ENCODE measurements at regions of chr1 and their contacts with region 1.

Region 1: DNA sequence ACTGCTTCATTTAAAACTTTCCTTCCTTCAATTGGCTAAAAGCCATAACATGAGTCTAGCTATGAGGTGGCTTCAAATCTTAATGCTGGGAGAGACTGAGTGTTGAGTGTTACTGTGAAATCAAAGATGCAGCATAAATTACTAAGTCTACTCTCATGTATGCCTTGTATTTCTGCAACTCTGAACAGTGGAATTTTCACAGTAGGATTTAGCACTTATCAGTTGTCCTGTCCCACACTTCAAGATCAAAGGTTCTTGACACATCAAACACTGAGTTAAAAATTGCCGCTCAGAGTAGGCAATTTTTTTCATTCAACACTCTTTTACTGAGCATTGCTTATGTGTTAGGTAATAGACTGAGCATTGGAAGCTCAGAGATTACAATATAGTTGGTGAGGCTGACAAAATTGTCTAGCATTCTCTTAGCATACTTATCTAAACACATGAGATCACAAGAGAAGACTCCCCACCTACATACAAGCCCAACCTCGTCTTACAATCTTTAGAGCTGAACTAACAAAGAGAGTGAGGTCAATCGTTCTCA is 56.4 kb upstream of the ADORA3 start:
- DNase-seq: no peak
- ATAC-seq: no peak
- H3K4me3 ChIP-seq: no peak overlapping the region
- H3K4me3 Mint-ChIP-seq: no peak overlapping the region
- H3K27ac ChIP-seq: no peak overlapping the region
- H3K27ac Mint-ChIP-seq: no peak overlapping the region
- H3K4me1 ChIP-seq: no peaks in the 10 kb centered on the region
- H3K4me1 Mint-ChIP-seq: peaks cover 6% of the 10 kb centered on the region
- H3K27me3 ChIP-seq: no peaks in the 10 kb centered on the region
- H3K27me3 Mint-ChIP-seq: no peaks in the 10 kb centered on the region
- CTCF ChIP-seq: no peak

Region 2: GRCh38 chr1:110986407-110986891 is 573.4 kb before region 1 on chr1:
- CTCF ChIA-PET with region 1: no interaction called
- POLR2A ChIA-PET with region 1: no interaction called
- intact Hi-C with region 1: no loop called
- DNase-seq: peak in 1 of 9 experiments; percentile 11
- ATAC-seq: no peak
- H3K4me3 ChIP-seq: no peak overlapping the region
- H3K4me3 Mint-ChIP-seq: no peak overlapping the region
- H3K27ac ChIP-seq: no peak overlapping the region
- H3K27ac Mint-ChIP-seq: no peak overlapping the region
- H3K4me1 ChIP-seq: peaks cover 7% of the 10 kb centered on the region
- H3K4me1 Mint-ChIP-seq: peaks cover 18% of the 10 kb centered on the region
- H3K27me3 ChIP-seq: no peaks in the 10 kb centered on the region
- H3K27me3 Mint-ChIP-seq: peaks cover 2% of the 10 kb centered on the region
- CTCF ChIP-seq: no peak

Region 3: GRCh38 chr1:111346089-111346885 is 213.5 kb before region 1 on chr1:
- CTCF ChIA-PET with region 1: no interaction called
- POLR2A ChIA-PET with region 1: no interaction called
- intact Hi-C with region 1: no loop called
- DNase-seq: peak; percentile 75 to 96 (median 87)
- ATAC-seq: peak; percentile 86
- H3K4me3 ChIP-seq: peak overlapping the region; percentile 67 to 68
- H3K4me3 Mint-ChIP-seq: peak overlapping the region; percentile 89
- H3K27ac ChIP-seq: peak overlapping the region; percentile 51 to 63
- H3K27ac Mint-ChIP-seq: peak overlapping the region; percentile 90
- H3K4me1 ChIP-seq: no peaks in the 10 kb centered on the region
- H3K4me1 Mint-ChIP-seq: peaks cover 23% of the 10 kb centered on the region
- H3K27me3 ChIP-seq: no peaks in the 10 kb centered on the region
- H3K27me3 Mint-ChIP-seq: no peaks in the 10 kb centered on the region
- CTCF ChIP-seq: no peak

Region 4: DNA sequence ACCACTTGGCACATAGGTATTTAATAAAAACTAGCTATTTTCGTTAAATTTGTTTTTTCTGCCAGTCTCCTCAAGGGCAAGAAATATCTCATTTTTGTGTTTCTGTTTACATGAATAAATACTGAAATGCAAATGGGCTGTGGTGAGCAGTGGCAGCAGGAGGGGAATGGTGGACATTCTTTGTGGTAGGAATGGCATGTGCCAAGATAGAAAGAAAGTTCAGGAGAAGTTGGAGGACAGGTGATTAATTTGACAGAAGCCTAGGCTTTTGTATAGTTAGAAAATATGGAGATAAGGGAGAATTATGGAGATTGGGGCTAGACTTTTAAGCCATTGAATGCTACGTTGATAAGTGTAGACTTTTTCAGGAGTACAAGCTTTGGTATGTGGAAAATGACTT is 68.3 kb after region 1 on chr1:
- CTCF ChIA-PET with region 1: no interaction called
- POLR2A ChIA-PET with region 1: no interaction called
- intact Hi-C with region 1: loop called in 1 of 2 experiments (anchors 5 kb)
- DNase-seq: no peak
- ATAC-seq: no peak
- H3K4me3 ChIP-seq: no peak overlapping the region
- H3K4me3 Mint-ChIP-seq: peak overlapping the region; percentile 49
- H3K27ac ChIP-seq: peak overlapping the region in 1 of 2 experiments; percentile 51
- H3K27ac Mint-ChIP-seq: peak overlapping the region; percentile 78
- H3K4me1 ChIP-seq: peaks cover 88% of the 10 kb centered on the region
- H3K4me1 Mint-ChIP-seq: peaks cover 88% of the 10 kb centered on the region
- H3K27me3 ChIP-seq: no peaks in the 10 kb centered on the region
- H3K27me3 Mint-ChIP-seq: no peaks in the 10 kb centered on the region
- CTCF ChIP-seq: no peak